Transverse colon (tissue), 4 donors: ENCODE measurements at regions of chr1 and their contacts with region 1.

Region 1: DNA sequence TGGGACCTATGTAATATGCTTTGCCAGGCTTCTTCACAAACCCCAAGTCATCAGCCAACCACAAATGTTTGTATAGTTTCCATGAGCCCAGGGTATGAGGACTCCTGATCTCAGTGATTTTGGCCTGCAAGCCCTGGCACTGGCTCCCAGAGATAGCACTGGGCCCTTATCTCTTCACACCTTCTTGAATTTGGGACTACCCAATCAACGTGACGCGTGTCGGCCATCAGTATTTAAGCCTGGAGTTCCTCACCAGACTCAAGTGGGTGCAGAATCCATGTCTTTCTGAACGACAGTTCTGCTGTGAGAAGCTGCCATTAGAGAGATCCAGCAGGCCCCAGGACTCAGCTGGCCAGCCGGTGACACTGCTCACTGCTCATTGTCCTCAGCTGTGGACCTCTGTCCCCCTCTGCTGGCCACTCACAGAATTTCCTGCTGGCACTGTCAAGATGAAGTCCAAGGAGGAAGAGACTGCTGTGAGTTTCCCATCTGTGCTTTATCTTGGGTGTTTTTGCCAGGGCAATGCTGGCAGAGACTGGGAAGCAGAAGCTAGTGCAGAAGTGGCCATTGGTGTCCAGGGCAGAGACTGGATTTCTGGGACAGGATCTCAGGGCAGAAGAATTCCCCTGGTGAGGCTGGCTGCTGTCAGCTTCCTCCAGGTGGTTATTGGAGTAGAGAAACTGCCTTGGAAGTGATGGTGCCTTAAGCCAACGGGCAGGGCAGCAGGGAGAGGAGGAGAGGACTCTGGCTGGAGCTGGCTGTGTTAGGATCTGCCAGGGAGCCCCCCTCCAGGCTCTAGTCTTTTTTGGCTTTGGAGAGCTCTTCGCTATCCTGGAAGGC is 28.4 kb downstream of the TMCC2 start:
- DNase-seq: peak; percentile 93
- H3K4me3 ChIP-seq: no peak overlapping the region
- H3K27ac ChIP-seq: peak overlapping the region in 1 of 4 donors; percentile 22
- H3K4me1 ChIP-seq: peaks cover 0 to 16% (median 0%) of the 10 kb centered on the region in 4 donors
- H3K27me3 ChIP-seq: no peaks in the 10 kb centered on the region
- CTCF ChIP-seq: peak; percentile 94 to 99 (median 97)
- EP300 ChIP-seq: no peak
- POLR2A ChIP-seq: no peak

Region 2: GRCh38 chr1:204927673-204928641 is 328.2 kb before region 1 on chr1:
- in situ Hi-C with region 1: no loop called
- intact Hi-C with region 1: no loop called
- DNase-seq: no peak
- H3K4me3 ChIP-seq: no peak overlapping the region
- H3K27ac ChIP-seq: no peak overlapping the region
- H3K4me1 ChIP-seq: peaks cover 0 to 7% (median 2%) of the 10 kb centered on the region in 4 donors
- H3K27me3 ChIP-seq: no peaks in the 10 kb centered on the region
- CTCF ChIP-seq: no peak
- EP300 ChIP-seq: no peak
- POLR2A ChIP-seq: no peak

Region 3: DNA sequence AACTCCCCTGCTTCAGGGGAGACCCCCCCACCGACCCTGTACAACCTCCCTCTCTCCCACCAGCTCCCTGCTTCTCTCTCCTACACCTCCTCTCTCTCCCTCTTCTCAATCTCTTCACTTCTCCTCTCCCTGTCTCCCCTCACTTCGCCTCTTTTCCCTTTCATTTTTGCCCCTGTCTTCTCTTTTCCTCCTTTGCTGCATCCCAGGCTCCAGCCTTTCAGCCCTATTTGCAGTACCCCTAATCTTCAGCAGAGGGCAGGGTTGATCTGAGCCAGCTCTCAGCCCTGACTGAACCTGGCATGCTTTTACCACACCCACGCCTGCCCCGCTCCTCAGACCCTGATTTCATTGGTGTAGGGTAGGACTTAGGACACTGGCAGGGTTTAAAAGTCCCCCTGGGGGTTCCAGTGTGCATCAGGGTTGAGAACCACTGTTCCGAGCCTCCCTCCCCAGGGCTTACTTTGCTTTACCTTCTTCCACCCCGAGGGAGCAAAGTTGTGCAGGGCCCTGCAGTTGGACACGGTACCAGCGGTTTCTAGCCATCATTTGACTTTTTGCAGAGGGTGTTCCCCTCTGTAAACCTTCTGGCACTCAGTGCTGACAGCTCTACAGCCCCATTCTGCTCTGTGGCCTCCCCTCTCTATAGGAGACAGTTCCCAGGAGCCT is 280.5 kb before region 1 on chr1:
- in situ Hi-C with region 1: loop called in 2 of 4 experiments (anchors 10 kb)
- intact Hi-C with region 1: no loop called
- DNase-seq: peak; percentile 44
- H3K4me3 ChIP-seq: no peak overlapping the region
- H3K27ac ChIP-seq: no peak overlapping the region
- H3K4me1 ChIP-seq: no peaks in the 10 kb centered on the region
- H3K27me3 ChIP-seq: no peaks in the 10 kb centered on the region
- CTCF ChIP-seq: peak; percentile 69 to 85 (median 81)
- EP300 ChIP-seq: no peak
- POLR2A ChIP-seq: no peak

Region 4: DNA sequence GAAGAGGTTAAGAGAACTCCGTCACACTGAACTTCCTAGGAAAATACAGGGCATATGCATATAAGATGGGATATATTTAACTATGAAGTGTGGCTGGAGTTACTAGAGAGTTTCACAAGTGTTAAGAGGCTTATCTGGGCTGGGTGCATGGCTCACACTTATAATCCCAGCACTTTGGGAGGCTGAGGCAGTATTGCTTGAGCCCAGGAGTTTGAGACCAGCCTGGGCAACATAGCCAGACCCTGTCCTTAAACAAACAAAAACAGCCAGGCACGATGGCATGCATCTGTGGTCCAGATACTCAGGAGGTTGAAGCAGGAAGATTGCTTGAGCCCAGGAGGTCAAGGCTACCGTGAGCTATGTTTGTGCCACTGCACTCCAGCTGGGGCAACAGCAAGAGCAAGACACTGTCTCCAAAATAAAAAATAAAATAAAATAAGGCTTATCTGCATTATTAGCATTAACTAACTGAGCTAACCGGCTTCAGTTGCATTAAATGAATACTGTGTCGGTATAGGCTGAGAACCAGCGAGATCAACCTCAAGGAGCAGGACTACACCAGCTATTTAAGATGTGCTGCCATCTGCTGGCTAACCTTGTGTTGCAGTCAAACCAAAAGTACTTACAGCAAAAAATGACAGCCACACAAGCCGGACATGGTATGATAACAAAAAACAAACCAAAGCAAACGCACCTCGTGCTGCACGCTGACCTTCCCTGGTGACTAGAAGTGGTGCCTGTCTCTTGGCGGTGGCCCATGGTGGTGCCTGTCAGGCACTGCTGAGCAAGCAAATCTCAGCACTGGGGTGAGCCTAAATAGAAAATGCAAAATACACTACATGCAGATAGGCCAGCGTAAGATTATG is 114.7 kb before region 1 on chr1:
- in situ Hi-C with region 1: no loop called
- intact Hi-C with region 1: loop called (anchors 10 kb)
- DNase-seq: peak; percentile 80
- H3K4me3 ChIP-seq: no peak overlapping the region
- H3K27ac ChIP-seq: no peak overlapping the region
- H3K4me1 ChIP-seq: peaks cover 0 to 9% (median 5%) of the 10 kb centered on the region in 4 donors
- H3K27me3 ChIP-seq: no peaks in the 10 kb centered on the region
- CTCF ChIP-seq: peak; percentile 71 to 86 (median 76)
- EP300 ChIP-seq: no peak
- POLR2A ChIP-seq: no peak

Region 5: GRCh38 chr1:205229399-205229871 is 26.7 kb before region 1 on chr1:
- in situ Hi-C with region 1: no loop called
- intact Hi-C with region 1: no loop called
- DNase-seq: peak; percentile 66
- H3K4me3 ChIP-seq: peak overlapping the region; percentile 28 to 64 (median 41)
- H3K27ac ChIP-seq: peak overlapping the region in 3 of 4 donors; percentile 26 to 62 (median 37)
- H3K4me1 ChIP-seq: peaks cover 10 to 32% (median 24%) of the 10 kb centered on the region in 4 donors
- H3K27me3 ChIP-seq: peaks cover 31% of the 10 kb centered on the region
- CTCF ChIP-seq: peak in 2 of 5 experiments; percentile 21 to 24
- EP300 ChIP-seq: no peak
- POLR2A ChIP-seq: no peak